IMR-90 (cell line): ENCODE measurements at regions of chr12 and their contacts with region 1.

Region 1: GRCh38 chr12:100311317-100311716 is 44.3 kb downstream of the SCYL2 start:
- DNase-seq: no peak
- ATAC-seq: no peak
- H3K4me3 ChIP-seq: no peak overlapping the region
- H3K27ac ChIP-seq: no peak overlapping the region
- H3K4me1 ChIP-seq: no peaks in the 10 kb centered on the region
- H3K27me3 ChIP-seq: no peaks in the 10 kb centered on the region
- CTCF ChIP-seq: no peak
- POLR2A ChIP-seq: no peak
- RAD21 ChIP-seq: no peak

Region 2: DNA sequence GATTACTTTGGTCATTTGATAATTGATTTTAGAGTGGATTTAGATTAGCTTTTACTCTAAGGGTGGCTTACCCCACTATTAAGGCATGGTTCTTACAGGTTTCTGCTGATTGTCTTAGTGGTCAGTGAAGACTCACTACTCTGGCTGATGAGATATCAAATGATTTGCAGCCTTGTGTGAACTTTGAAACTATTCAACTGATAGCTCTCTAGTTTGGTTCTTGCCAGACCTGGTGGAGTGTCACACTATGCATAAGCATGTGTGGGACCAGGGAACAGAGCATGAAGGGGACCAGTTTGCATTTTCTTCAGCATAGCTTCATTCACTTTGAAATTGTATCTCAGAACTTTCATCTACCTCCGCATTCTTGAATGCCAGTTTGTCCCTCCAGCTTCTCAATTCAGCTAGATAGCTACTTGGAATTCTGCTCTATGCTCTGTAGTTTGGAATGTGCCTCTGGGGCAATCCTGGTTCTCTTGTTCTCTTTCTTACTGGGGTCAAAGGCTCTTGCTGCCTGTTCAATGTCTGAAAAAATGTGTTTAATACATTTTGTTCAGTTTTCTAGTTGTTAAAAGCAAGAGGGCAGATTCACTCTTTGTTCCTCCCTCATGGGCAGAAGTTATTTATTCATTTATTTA is 31.6 kb before region 1 on chr12:
- CTCF ChIA-PET with region 1: no interaction called
- POLR2A ChIA-PET with region 1: no interaction called
- dilution Hi-C with region 1: no loop called
- in situ Hi-C with region 1: no loop called
- intact Hi-C with region 1: loop called (anchors 5 kb)
- DNase-seq: no peak
- ATAC-seq: peak; percentile 68
- H3K4me3 ChIP-seq: no peak overlapping the region
- H3K27ac ChIP-seq: no peak overlapping the region
- H3K4me1 ChIP-seq: peaks cover 2% of the 10 kb centered on the region; the same call in 1 of the 2 replicates
- H3K27me3 ChIP-seq: no peaks in the 10 kb centered on the region
- CTCF ChIP-seq: no peak
- POLR2A ChIP-seq: no peak
- RAD21 ChIP-seq: no peak